ENCODE measurements at regions of chr16 and their contacts with region 1.

Region 1: DNA sequence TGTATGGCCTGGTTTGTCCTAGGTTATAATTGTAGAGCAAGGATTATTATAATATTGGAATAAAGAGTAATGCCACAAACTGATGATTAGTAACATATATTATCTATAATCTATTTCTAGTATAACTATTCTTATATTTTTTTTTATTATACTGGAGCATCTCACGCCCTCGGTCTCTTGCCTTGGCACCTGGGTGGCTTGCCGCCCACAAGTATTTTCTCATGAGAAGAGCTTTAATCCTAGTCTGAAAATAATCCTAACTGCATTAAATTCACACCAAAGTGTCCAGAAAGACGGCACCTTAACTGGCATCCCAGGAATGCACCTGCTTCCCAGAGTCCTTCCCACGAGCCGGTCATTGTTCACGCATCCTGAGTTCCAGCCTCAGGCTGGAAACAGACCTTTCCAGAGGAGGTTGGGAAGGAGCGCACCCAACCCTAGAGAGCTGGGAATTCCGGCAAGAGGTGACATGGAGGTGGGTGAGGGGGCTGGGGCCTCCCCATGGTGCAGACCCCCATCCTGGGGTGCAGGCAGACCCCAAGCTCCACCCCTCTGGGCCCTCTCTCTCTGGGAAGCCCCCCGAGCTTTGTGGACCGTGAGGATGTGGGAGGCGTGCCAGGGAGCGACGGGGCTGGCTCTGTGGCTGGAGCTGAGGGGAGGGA is 15.9 kb downstream of the CHMP1A start:
- DNase-seq: no peak
- H3K4me3 ChIP-seq: no peak overlapping the region
- CTCF ChIP-seq: no peak

Region 2: DNA sequence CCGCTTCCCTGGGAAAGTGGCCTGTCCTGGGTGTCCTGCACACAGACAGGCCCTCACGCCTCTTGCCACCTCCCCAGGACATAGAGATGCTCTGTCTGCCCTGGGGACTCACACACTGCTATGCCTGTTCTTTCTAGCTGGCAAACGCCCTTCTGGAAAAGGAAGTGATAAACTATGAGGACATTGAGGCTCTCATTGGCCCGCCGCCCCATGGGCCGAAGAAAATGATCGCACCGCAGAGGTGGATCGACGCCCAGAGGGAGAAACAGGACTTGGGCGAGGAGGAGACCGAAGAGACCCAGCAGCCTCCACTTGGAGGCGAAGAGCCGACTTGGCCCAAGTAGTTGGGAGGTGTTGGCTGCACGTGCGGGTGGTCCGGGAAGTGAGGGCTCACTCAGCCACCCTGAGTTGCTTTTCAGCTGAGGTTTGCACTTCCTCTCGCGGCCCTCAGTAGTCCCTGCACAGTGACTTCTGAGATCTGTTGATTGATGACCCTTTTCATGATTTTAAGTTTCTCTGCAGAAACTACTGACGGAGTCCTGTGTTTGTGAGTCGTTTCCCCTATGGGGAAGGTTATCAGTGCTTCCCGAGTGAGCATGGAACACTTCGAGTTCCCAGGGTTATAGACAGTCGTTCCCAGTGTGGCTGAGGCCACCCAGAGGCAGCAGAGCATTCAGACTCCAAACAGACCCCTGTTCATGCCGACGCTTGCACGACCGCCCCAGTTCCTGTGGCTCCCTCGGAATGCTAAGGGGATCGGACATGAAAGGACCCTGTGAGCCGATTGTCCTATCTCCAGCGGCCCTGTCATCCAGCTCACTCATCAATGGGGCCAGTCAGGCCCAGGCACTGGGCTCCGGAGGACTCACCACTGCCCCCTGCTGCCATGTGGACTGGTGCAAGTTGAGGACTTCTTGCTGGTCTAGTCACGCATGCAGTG is 84.6 kb before region 1 on chr16:
- CTCF ChIA-PET with region 1: interaction called, 18 read pairs
- POLR2A ChIA-PET with region 1: no interaction called
- DNase-seq: peak; percentile 5
- H3K4me3 ChIP-seq: no peak overlapping the region
- CTCF ChIP-seq: peak; percentile 87

Region 3: DNA sequence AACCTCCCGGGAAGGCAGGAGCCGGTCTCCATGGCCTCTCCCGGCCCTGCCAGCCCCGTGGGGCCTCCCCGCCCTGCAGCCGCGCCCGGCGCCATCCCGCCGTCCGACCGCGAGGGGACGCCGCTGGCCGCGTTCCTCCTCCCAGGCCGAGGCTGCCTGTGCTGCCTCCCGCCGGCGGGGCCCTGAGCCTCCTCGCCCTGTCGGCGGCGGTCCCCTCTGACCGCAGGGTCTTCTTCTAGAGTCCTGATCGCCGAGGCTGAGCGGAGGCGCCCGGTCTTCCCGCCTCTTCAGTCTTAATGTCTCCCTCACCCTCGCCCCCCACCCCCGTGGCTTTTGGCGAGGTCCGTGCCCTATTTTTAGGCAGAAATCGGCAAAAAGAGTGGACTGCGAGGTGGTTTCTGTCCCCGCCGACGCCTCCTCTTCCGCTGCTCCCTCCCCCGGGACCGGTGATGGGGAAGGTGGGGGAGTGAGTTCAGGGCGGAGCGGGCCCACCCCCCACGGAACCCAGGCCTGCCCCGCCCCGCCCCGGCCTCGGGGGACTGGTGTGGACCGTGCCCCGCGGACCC is 66.8 kb before region 1 on chr16:
- CTCF ChIA-PET with region 1: interaction called, 34 read pairs
- POLR2A ChIA-PET with region 1: interaction called, 3 read pairs
- DNase-seq: no peak
- H3K4me3 ChIP-seq: peak overlapping the region; percentile 43
- CTCF ChIP-seq: peak; percentile 83

Region 4: DNA sequence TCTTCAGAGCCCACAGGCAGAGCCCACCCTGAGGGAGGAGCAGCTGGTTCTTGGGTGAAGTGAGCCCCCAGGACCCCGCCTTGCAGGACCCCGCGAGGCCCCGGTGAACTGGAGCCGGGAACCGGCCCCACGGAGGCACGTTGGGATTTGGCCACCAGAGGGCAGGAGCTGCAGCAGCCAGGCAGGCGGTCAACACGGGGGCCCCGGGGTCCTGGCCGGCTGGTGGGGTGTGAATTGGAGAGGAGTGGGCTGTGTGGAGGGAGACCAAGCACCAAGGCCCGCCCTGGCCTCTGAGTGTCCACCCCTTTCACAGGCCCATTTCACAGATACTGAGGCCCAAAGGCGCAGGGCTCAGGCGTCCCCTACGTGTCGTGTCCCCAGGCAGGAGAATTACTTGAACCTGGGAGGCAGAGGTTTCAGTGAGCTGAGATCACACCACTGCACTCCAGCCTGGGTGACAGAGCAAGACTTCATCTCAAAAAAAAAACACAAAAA is 25.9 kb before region 1 on chr16:
- CTCF ChIA-PET with region 1: interaction called, 14 read pairs
- POLR2A ChIA-PET with region 1: no interaction called
- DNase-seq: no peak
- H3K4me3 ChIP-seq: no peak overlapping the region
- CTCF ChIP-seq: peak; percentile 75

Region 5: DNA sequence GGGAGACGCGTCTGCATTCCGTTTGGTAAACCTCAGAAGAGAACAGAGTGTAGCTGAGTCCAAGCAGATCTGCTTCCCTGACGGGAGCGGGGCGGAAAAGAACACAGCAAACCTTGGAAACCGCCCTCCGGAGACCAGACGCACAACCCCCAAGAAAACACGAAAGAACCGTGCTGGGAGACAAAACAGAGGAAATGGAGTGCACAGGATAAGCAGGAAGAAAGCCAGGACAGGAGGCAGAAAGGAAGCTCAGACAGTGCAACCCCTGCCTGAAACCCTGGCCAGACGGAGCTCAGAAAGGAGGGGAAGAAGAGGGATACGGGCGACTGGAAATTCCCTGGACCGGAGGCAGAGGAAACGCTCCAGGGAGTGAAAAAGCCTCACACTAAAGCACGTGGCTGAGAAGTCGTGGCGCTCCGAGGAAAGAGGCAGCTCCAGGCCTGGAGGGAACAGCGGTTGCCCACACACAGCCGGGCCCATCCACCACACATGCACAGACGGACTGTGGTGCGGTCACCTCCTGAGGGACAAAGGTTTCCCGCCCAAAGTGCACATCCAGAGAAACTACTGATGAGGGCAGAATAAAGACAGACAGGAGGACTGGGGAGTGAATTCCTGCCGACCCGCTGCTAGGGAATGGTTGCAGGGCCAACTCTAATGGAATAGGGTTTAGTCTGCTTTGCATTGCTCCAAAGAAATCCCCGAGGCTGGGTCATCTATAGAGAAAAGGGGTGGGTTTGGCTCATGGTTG is 17.9 kb before region 1 on chr16:
- CTCF ChIA-PET with region 1: interaction called, 13 read pairs
- POLR2A ChIA-PET with region 1: no interaction called
- DNase-seq: no peak
- H3K4me3 ChIP-seq: no peak overlapping the region
- CTCF ChIP-seq: no peak

Region 6: GRCh38 chr16:89656435-89657135 is 15.0 kb after region 1 on chr16:
- CTCF ChIA-PET with region 1: interaction called, 24 read pairs
- POLR2A ChIA-PET with region 1: no interaction called
- DNase-seq: no peak
- H3K4me3 ChIP-seq: peak overlapping the region; percentile 95
- CTCF ChIP-seq: no peak

Measured in AG04449 (cell line).